ENCODE measurements at regions of chr10 and their contacts with region 1.

Region 1: DNA sequence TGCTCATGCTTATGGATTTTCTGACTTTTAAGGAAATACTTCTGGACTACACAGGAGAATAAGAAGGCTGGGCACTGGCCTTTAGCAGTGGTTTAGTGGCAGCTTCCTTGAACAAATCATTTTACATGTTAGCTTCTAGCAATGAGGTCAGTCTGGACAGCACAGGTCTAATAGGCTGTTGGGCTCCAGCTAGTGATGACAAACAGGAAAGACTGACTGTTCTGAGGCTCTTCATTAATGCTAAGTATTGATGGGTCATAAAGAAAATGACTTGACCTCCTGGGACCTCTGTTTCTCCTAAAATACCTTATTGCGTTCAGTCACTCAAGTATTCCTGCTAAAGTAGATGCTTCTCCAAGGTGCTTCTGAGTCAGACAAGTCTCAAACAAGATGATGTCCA is 4.9 kb upstream of the RHOBTB1 start:
- DNase-seq: no peak
- ATAC-seq: no peak
- H3K4me3 ChIP-seq: no peak overlapping the region
- H3K4me3 Mint-ChIP-seq: no peak overlapping the region
- H3K27ac ChIP-seq: no peak overlapping the region
- H3K27ac Mint-ChIP-seq: no peak overlapping the region
- H3K4me1 ChIP-seq: peaks cover 4 to 7% of the 10 kb centered on the region in 2 experiments
- H3K4me1 Mint-ChIP-seq: peaks cover 5% of the 10 kb centered on the region in 3 donors
- H3K27me3 ChIP-seq: peaks cover 0 to 16% of the 10 kb centered on the region in 2 experiments
- H3K27me3 Mint-ChIP-seq: peaks cover 42 to 44% of the 10 kb centered on the region in 2 donors

Region 2: GRCh38 chr10:59894114-59894513 is 1054.7 kb before region 1 on chr10:
- CTCF ChIA-PET with region 1: no interaction called
- POLR2A ChIA-PET with region 1: no interaction called
- DNase-seq: no peak
- ATAC-seq: no peak
- H3K4me3 ChIP-seq: no peak overlapping the region
- H3K4me3 Mint-ChIP-seq: no peak overlapping the region
- H3K27ac ChIP-seq: no peak overlapping the region
- H3K27ac Mint-ChIP-seq: peak overlapping the region in 1 of 2 donors; percentile 55
- H3K4me1 ChIP-seq: peaks cover 0 to 3% of the 10 kb centered on the region in 2 experiments
- H3K4me1 Mint-ChIP-seq: peaks cover 79 to 83% (median 82%) of the 10 kb centered on the region in 3 donors
- H3K27me3 ChIP-seq: no peaks in the 10 kb centered on the region
- H3K27me3 Mint-ChIP-seq: no peaks in the 10 kb centered on the region

Region 3: GRCh38 chr10:60921633-60922032 is 27.2 kb before region 1 on chr10:
- CTCF ChIA-PET with region 1: no interaction called
- POLR2A ChIA-PET with region 1: no interaction called
- DNase-seq: no peak
- ATAC-seq: no peak
- H3K4me3 ChIP-seq: no peak overlapping the region
- H3K4me3 Mint-ChIP-seq: no peak overlapping the region
- H3K27ac ChIP-seq: no peak overlapping the region
- H3K27ac Mint-ChIP-seq: no peak overlapping the region
- H3K4me1 ChIP-seq: peaks cover 0 to 2% of the 10 kb centered on the region in 2 experiments
- H3K4me1 Mint-ChIP-seq: no peaks in the 10 kb centered on the region
- H3K27me3 ChIP-seq: peaks cover 0 to 4% of the 10 kb centered on the region in 2 experiments
- H3K27me3 Mint-ChIP-seq: peaks cover 0 to 15% of the 10 kb centered on the region in 2 donors

Region 4: DNA sequence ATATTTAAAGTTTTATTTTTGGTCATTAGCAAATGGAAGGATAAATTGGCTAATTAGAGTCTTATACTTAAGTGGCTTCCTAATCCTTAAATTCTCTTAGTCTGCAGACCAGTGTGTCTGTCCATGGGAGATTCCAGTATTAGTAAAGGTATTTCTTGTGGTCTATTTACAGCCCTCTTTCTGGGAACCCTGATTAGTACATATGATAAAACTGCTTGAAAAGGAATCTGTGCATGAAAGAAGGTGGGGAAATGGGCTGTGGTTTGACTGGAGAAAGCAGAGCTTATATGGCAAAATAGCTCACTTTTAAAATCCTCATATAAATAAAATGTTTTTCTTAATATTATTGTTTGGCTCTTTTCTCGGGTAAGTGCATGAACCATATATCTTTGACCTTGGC is 119.6 kb after region 1 on chr10:
- CTCF ChIA-PET with region 1: interaction called in 1 of 2 experiments, 10 read pairs
- POLR2A ChIA-PET with region 1: no interaction called
- DNase-seq: no peak
- ATAC-seq: no peak
- H3K4me3 ChIP-seq: no peak overlapping the region
- H3K4me3 Mint-ChIP-seq: no peak overlapping the region
- H3K27ac ChIP-seq: no peak overlapping the region
- H3K27ac Mint-ChIP-seq: no peak overlapping the region
- H3K4me1 ChIP-seq: no peaks in the 10 kb centered on the region
- H3K4me1 Mint-ChIP-seq: no peaks in the 10 kb centered on the region
- H3K27me3 ChIP-seq: no peaks in the 10 kb centered on the region
- H3K27me3 Mint-ChIP-seq: peaks cover 3 to 6% of the 10 kb centered on the region in 2 donors

Region 5: DNA sequence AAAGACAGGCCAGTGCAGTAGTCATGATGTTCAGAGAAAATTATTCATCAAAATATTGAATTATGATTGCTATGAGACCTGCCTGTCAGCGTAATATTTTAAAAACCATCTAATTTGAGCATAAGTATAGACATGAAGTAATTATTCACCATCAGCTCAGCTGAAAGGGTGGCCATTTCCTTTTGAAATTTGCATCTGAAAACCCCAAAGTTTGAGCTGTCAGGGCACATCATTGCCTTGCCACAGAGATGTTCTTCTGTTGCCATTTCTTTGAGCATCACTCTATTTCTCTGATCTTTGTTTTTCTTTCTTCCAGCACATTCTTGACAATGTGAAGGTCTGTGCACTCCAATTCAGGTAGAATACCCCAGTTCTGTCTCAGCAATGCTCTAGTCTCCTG is 142.7 kb after region 1 on chr10:
- CTCF ChIA-PET with region 1: no interaction called
- POLR2A ChIA-PET with region 1: no interaction called
- DNase-seq: no peak
- ATAC-seq: no peak
- H3K4me3 ChIP-seq: no peak overlapping the region
- H3K4me3 Mint-ChIP-seq: no peak overlapping the region
- H3K27ac ChIP-seq: no peak overlapping the region
- H3K27ac Mint-ChIP-seq: no peak overlapping the region
- H3K4me1 ChIP-seq: no peaks in the 10 kb centered on the region
- H3K4me1 Mint-ChIP-seq: no peaks in the 10 kb centered on the region
- H3K27me3 ChIP-seq: no peaks in the 10 kb centered on the region
- H3K27me3 Mint-ChIP-seq: peaks cover 0 to 7% of the 10 kb centered on the region in 2 donors

Measured in T-cell (primary cell).